ENCODE measurements at regions of chr2 and their contacts with region 1.

Region 1: DNA sequence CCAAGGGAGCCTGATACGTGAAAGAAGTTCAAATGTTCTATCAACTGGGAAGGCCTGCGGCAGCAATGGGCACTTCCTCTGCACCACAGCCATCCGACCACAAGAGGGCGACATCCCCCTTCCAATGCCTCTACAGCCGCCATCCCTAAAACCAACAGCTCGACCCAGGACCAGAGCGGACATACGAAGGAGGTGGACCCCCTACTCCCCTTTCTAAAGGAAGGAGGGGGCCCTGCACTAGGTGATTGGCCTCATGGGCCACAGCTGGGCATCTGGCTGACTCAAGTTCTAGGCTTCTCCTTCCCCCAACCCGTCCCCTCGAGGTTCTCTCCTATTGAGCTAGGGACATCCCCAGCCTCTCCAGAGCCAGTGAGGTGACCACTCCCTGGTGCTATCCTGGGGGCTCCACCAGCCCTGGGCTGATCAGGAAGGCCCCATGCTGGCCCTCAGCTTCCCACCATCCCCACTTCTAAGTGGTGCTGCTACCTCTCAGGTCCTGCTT is 217.2 kb downstream of the TNS1 start:
- DNase-seq: peak; percentile 80
- H3K4me3 ChIP-seq: no peak overlapping the region
- H3K27ac ChIP-seq: peak overlapping the region in 1 of 4 donors; percentile 5
- H3K4me1 ChIP-seq: no peaks in the 10 kb centered on the region
- H3K27me3 ChIP-seq: no peaks in the 10 kb centered on the region
- CTCF ChIP-seq: peak; percentile 89 to 99 (median 96)
- EP300 ChIP-seq: no peak
- POLR2A ChIP-seq: no peak

Region 2: GRCh38 chr2:217880287-217880889 is 94.8 kb after region 1 on chr2:
- in situ Hi-C with region 1: loop called in 2 of 4 experiments (anchors 5 to 10 kb)
- intact Hi-C with region 1: loop called (anchors 5 kb)
- DNase-seq: no peak
- H3K4me3 ChIP-seq: no peak overlapping the region
- H3K27ac ChIP-seq: peak overlapping the region in 3 of 4 donors; percentile 50 to 81 (median 55)
- H3K4me1 ChIP-seq: peaks cover 0 to 19% (median 9%) of the 10 kb centered on the region in 4 donors
- H3K27me3 ChIP-seq: no peaks in the 10 kb centered on the region
- CTCF ChIP-seq: no peak
- EP300 ChIP-seq: no peak
- POLR2A ChIP-seq: no peak

Region 3: DNA sequence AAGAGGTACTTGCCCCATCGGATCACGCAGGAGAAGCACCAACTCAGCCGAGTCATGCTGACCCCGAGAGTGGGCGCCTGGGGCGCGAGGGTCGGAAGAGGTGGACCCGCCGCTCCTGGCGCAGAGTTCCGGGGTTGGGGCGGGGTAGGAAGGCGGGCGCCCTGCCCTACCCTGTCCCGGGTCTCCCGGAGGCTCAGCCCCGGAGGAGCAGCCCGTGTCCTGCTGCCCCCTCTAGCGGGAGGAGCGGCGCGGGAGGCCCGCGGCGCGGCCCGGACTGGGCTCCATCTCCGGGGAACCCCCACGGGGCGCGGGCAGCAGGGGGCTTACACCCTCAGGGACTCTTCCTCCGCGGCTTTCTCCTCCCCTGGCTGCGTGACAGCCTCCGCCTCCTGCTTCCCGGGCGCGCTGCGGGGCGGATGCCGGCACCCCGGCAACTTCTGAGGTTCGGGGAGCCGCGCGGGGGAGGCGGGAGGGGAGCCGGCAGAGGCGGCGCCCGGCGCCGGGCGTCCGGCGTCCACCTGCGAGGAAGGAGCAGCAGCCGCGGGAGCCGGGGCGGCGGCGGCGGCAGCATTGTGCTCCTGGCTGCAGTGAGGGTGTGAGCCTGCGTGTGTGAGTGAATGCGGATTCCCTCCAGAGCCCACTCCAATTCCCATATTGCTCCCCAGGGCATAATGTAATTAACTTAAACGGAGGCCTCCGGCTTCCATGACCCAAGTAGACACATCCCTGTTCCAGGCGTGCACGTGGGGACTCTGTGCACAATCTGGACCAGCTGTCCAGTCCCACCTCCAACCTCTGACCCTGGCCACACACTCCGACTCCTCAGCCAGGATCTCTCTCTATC is 224.8 kb after region 1 on chr2:
- in situ Hi-C with region 1: loop called in 1 of 4 experiments (anchors 25 kb)
- intact Hi-C with region 1: no loop called
- DNase-seq: peak; percentile 50
- H3K4me3 ChIP-seq: peak overlapping the region; percentile 22 to 53 (median 36)
- H3K27ac ChIP-seq: no peak overlapping the region
- H3K4me1 ChIP-seq: peaks cover 6 to 19% (median 14%) of the 10 kb centered on the region in 4 donors
- H3K27me3 ChIP-seq: peaks cover 50% of the 10 kb centered on the region
- CTCF ChIP-seq: peak; percentile 26 to 56 (median 45)
- EP300 ChIP-seq: no peak
- POLR2A ChIP-seq: no peak

Region 4: DNA sequence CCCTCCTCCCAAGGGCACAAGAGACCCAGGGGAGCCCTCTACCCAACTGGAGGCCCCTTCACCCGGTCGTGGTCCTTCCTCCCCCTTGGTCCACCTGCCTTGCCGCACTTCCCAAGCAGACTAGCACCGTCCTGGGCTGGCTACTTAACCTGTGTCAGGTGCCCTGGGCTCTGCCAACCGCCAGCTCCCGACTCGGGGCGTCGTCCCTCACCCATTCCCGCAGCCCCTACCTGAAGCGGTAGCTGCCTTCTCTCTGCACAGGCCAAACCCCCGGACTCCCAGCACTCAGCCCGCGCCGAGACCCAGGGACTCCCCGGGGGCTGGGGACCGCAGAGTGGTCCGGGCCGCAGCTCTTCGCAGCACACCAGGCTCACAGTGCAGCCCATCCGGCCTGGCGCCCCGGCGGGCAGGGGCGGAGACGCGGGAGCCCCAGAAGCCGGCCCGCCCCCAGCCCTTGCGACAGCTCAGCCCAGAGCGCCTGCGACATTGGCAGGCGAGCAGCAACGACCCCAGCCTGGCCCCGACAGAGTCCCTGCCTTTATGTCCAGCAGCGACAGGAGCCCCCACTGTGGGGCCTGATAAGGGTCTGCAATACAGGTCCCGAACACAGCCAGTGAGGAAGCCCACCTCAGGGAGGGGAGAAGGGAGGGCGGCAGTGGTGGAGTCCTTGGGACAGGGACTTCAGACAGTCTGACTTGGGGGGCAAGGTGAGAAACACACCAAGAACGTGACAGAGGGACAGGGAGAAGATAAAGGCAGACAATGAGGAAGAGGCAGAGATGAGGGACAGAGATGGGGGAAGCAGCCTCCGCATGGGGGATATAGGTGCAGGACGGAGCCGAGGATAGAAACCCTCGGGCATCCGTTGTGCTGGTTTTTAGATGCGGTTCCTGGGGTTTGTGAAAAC is 248.2 kb after region 1 on chr2:
- in situ Hi-C with region 1: no loop called
- intact Hi-C with region 1: loop called (anchors 5 kb)
- DNase-seq: no peak
- H3K4me3 ChIP-seq: peak overlapping the region in 1 of 4 donors; percentile 9
- H3K27ac ChIP-seq: no peak overlapping the region
- H3K4me1 ChIP-seq: peaks cover 0 to 5% (median 5%) of the 10 kb centered on the region in 4 donors
- H3K27me3 ChIP-seq: peaks cover 18% of the 10 kb centered on the region
- CTCF ChIP-seq: no peak
- EP300 ChIP-seq: no peak
- POLR2A ChIP-seq: no peak

Region 5: DNA sequence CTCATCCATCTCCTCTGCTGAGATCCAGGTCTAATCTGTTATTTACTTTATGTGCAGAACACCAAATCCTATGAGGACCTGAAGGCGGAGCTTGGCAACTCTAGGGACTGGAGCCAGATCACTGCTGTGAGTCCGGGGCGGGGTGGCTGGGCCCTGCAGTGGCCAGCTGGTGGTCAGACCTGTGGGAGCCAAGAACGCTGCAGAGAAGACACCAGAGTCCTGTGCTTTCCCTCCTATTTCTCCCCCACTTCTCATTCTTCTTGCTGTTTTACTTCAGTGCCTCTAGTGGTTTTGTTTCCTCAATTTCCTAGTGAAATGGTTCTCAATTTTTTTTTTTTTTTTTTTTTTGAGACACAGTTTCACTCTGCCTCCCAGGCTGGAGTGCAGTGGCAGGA is 653.0 kb after region 1 on chr2:
- in situ Hi-C with region 1: no loop called
- intact Hi-C with region 1: no loop called
- DNase-seq: peak; percentile 23
- H3K4me3 ChIP-seq: no peak overlapping the region
- H3K27ac ChIP-seq: peak overlapping the region in 2 of 4 donors; percentile 26 to 36
- H3K4me1 ChIP-seq: peaks cover 0 to 8% (median under 1%) of the 10 kb centered on the region in 4 donors
- H3K27me3 ChIP-seq: no peaks in the 10 kb centered on the region
- CTCF ChIP-seq: no peak
- EP300 ChIP-seq: no peak
- POLR2A ChIP-seq: no peak